ENCODE measurements at regions of chr14 and their contacts with region 1.

Region 1: GRCh38 chr14:106013879-106014376 is 487.5 kb downstream of the TMEM121 start:
- DNase-seq: peak in 2 of 9 experiments; percentile 23 to 40
- ATAC-seq: peak; percentile 62
- H3K4me3 ChIP-seq: no peak overlapping the region
- H3K4me3 Mint-ChIP-seq: no peak overlapping the region
- H3K27ac ChIP-seq: no peak overlapping the region
- H3K27ac Mint-ChIP-seq: no peak overlapping the region
- H3K4me1 ChIP-seq: no peaks in the 10 kb centered on the region
- H3K4me1 Mint-ChIP-seq: peaks cover 10% of the 10 kb centered on the region
- H3K27me3 ChIP-seq: no peaks in the 10 kb centered on the region
- H3K27me3 Mint-ChIP-seq: peaks cover 4% of the 10 kb centered on the region
- CTCF ChIP-seq: no peak

Region 2: DNA sequence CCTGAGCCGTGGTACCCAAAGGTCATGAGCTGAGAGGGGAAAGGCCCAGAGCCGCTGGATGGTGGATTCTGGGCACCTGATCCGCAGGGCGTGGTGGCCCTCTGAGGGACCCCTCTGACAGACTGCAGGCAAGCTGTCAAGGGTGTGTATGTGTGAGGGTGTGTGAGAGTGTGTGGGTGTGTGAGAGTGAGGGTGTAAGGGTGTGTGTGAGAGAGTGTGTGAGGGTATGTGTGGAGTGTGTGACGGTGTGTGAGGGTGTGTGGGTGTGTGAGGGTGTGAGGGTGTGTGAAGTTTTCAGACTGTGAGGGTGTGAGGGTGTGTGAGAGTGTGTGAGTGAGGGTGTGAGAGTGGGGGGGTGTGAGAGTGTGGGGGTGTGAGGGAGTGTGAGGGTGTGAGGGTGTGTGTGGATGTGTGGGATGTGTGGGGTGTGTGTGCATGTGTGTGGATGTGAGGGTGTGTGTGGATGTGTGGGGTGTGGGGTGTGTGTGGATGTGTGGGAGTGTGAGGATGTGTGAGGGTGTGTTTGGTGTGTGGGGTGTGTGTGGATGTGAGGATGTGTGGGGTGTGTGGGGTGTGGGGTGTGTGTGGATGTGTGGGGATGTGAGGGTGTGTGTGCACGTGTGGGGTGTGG is 330.9 kb before region 1 on chr14:
- CTCF ChIA-PET with region 1: no interaction called
- POLR2A ChIA-PET with region 1: no interaction called
- intact Hi-C with region 1: loop called in 1 of 2 experiments (anchors 5 kb)
- DNase-seq: peak in 1 of 9 experiments; percentile 45
- ATAC-seq: no peak
- H3K4me3 ChIP-seq: no peak overlapping the region
- H3K4me3 Mint-ChIP-seq: no peak overlapping the region
- H3K27ac ChIP-seq: no peak overlapping the region
- H3K27ac Mint-ChIP-seq: no peak overlapping the region
- H3K4me1 ChIP-seq: no peaks in the 10 kb centered on the region
- H3K4me1 Mint-ChIP-seq: no peaks in the 10 kb centered on the region
- H3K27me3 ChIP-seq: no peaks in the 10 kb centered on the region
- H3K27me3 Mint-ChIP-seq: no peaks in the 10 kb centered on the region
- CTCF ChIP-seq: no peak

Region 3: GRCh38 chr14:105944632-105945610 is 69.0 kb before region 1 on chr14:
- CTCF ChIA-PET with region 1: interaction called, 9 read pairs
- POLR2A ChIA-PET with region 1: no interaction called
- intact Hi-C with region 1: loop called (anchors 2 kb)
- DNase-seq: peak; percentile 51 to 87 (median 80)
- ATAC-seq: peak; percentile 79
- H3K4me3 ChIP-seq: no peak overlapping the region
- H3K4me3 Mint-ChIP-seq: no peak overlapping the region
- H3K27ac ChIP-seq: no peak overlapping the region
- H3K27ac Mint-ChIP-seq: no peak overlapping the region
- H3K4me1 ChIP-seq: no peaks in the 10 kb centered on the region
- H3K4me1 Mint-ChIP-seq: peaks cover 13% of the 10 kb centered on the region
- H3K27me3 ChIP-seq: no peaks in the 10 kb centered on the region
- H3K27me3 Mint-ChIP-seq: peaks cover 7% of the 10 kb centered on the region
- CTCF ChIP-seq: peak; percentile 88

Region 4: GRCh38 chr14:105989566-105990302 is 24.2 kb before region 1 on chr14:
- CTCF ChIA-PET with region 1: interaction called, 15 read pairs
- POLR2A ChIA-PET with region 1: no interaction called
- intact Hi-C with region 1: no loop called
- DNase-seq: peak in 2 of 9 experiments; percentile 27 to 29
- ATAC-seq: peak; percentile 25
- H3K4me3 ChIP-seq: no peak overlapping the region
- H3K4me3 Mint-ChIP-seq: no peak overlapping the region
- H3K27ac ChIP-seq: no peak overlapping the region
- H3K27ac Mint-ChIP-seq: no peak overlapping the region
- H3K4me1 ChIP-seq: peaks cover 47% of the 10 kb centered on the region
- H3K4me1 Mint-ChIP-seq: peaks cover 52% of the 10 kb centered on the region
- H3K27me3 ChIP-seq: no peaks in the 10 kb centered on the region
- H3K27me3 Mint-ChIP-seq: no peaks in the 10 kb centered on the region
- CTCF ChIP-seq: no peak

Region 5: DNA sequence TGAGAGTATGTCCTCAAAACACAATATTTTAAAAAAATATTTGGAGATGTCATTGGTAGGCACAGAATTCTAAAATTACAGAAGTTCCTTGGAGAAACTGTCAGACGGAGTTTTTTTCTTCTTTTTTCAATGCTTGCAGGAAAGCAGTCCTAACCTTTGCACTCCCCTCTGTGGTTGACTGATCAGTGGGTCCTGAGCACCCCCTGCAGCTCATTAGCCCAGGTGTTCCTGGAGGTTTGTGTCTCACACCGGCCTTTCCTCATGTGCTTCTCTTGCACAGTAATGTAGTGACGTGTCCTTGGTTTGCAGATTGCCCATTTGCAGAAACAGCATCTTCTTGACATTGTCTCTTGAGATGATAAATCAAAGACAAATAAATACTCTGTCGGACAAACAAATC is 25.5 kb after region 1 on chr14:
- CTCF ChIA-PET with region 1: interaction called, 3 read pairs
- POLR2A ChIA-PET with region 1: no interaction called
- intact Hi-C with region 1: loop called in 1 of 2 experiments (anchors 2 kb)
- DNase-seq: peak; percentile 16 to 68 (median 57)
- ATAC-seq: peak; percentile 81
- H3K4me3 ChIP-seq: no peak overlapping the region
- H3K4me3 Mint-ChIP-seq: no peak overlapping the region
- H3K27ac ChIP-seq: no peak overlapping the region
- H3K27ac Mint-ChIP-seq: no peak overlapping the region
- H3K4me1 ChIP-seq: no peaks in the 10 kb centered on the region
- H3K4me1 Mint-ChIP-seq: peaks cover 2% of the 10 kb centered on the region
- H3K27me3 ChIP-seq: no peaks in the 10 kb centered on the region
- H3K27me3 Mint-ChIP-seq: no peaks in the 10 kb centered on the region
- CTCF ChIP-seq: peak; percentile 59

Region 6: GRCh38 chr14:106141242-106142220 is 127.6 kb after region 1 on chr14:
- CTCF ChIA-PET with region 1: no interaction called
- POLR2A ChIA-PET with region 1: no interaction called
- intact Hi-C with region 1: no loop called
- DNase-seq: peak in 5 of 9 experiments; percentile 16 to 63 (median 52)
- ATAC-seq: no peak
- H3K4me3 ChIP-seq: no peak overlapping the region
- H3K4me3 Mint-ChIP-seq: no peak overlapping the region
- H3K27ac ChIP-seq: no peak overlapping the region
- H3K27ac Mint-ChIP-seq: no peak overlapping the region
- H3K4me1 ChIP-seq: peaks cover 4% of the 10 kb centered on the region
- H3K4me1 Mint-ChIP-seq: peaks cover 14% of the 10 kb centered on the region
- H3K27me3 ChIP-seq: no peaks in the 10 kb centered on the region
- H3K27me3 Mint-ChIP-seq: no peaks in the 10 kb centered on the region
- CTCF ChIP-seq: no peak